ENCODE measurements at regions of chr11 and their contacts with region 1.

Region 1: DNA sequence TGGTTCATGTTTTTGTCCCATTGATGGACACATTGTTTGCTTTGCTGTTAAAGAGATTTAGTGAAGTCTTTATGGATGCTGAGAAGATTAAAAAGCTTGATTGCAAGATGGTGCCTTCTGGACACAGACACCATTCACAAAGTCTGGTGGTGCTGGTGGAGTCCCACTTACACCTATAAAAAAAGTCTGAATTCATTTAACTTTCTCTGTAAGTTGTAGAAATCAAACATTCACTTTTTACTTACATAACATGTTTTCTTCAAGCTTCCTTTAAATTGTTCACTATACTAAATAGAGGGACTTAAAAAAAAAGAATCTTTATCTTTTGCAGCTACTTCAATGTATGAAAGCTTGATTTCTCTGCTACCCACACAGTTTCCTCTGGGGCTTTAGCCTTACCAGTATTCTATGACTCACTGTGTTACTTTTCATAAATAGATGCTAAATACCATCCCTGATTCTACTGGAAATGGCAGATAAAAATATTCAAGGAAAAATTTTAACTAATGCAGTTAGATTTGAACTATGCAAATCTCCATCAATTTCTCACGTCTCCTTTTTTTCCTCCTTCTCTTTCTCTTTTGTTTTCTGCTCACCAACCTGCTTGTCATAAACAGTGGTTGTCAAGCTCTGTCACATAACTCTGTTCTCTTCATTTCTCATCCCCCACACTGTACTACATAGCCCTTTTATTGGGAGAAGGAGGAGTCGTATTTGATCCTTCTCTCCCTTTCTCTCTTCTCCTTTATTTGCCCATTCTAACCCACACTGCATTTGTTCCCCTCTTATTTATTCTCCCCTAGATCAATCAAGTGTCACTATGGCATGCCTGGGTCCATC is 89.7 kb downstream of the FAM76B start:
- DNase-seq: no peak
- H3K4me3 ChIP-seq: no peak overlapping the region
- H3K27ac ChIP-seq: peak overlapping the region in 1 of 2 donors; percentile 45
- H3K4me1 ChIP-seq: peaks cover 0 to 14% of the 10 kb centered on the region in 2 donors
- H3K27me3 ChIP-seq: no peaks in the 10 kb centered on the region
- CTCF ChIP-seq: no peak

Region 2: DNA sequence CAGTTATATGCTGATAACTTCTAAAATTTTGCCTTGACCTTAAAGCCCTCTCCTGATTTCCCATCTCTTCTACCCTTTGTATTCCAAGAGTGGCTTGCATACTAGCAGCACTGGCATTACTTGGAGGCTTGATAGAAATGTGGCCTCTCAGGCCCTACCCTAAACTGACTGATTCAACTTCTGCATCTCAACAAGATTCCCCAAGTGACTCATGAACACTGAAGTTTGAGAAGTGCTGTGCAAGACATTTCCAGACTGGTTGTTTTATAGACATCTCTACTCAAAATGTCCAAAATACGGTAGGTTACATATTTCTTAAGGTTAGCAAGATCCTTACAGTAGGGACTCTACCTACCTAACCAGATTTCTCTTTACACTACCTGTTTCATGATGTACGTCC is 517.5 kb before region 1 on chr11:
- intact Hi-C with region 1: no loop called
- DNase-seq: no peak
- H3K4me3 ChIP-seq: no peak overlapping the region
- H3K27ac ChIP-seq: no peak overlapping the region
- H3K4me1 ChIP-seq: no peaks in the 10 kb centered on the region
- H3K27me3 ChIP-seq: no peaks in the 10 kb centered on the region
- CTCF ChIP-seq: no peak

Region 3: DNA sequence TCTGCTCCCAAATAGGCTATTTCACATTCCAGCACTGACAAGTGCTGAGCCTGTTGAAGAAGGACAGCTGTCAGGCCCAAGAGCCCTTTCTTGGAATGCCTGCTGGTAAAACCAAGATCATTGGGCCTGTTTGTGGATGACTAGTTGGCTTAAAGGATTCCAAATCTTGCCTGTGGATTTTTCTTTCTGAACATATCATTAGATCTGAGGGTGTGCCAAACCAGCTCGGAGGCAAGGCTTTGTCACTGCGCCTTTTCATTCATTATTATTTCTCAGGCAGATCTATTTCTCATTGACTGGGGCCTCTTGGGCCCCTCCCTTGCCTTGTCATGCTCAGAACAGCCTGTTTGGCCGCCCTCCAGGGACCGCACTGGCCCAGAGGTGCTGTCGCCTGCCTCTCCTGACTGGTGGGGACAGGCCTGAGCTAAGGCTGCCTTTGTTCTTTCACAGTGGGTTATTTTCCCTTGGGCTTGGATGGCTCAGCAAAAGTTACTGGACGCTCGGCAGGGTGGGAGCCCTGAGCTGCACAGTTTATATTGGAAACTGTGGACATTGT is 246.2 kb before region 1 on chr11:
- intact Hi-C with region 1: loop called (anchors 5 kb)
- DNase-seq: peak in 1 of 2 donors; percentile 79
- H3K4me3 ChIP-seq: no peak overlapping the region
- H3K27ac ChIP-seq: peak overlapping the region; percentile 71 to 74
- H3K4me1 ChIP-seq: peaks cover 0 to 17% of the 10 kb centered on the region in 2 donors
- H3K27me3 ChIP-seq: no peaks in the 10 kb centered on the region
- CTCF ChIP-seq: no peak

Region 4: DNA sequence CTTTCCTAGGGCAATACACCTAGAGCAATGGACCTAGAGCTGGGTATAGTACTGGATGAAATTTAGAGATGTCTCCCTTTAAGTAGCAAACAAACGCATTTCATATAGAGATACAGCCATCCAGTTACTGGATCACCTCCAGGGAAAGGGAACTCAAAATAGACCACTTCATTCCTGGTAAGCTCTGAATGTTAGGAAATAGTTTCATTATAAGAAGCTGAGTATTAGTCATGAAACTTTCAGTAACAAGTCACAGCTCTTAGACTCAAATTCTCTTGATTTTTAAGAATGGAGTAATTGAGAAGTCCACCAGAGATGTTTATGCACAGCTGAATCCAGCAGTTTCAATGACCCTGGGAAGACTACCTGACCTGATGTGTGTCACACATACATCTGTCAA is 132.2 kb before region 1 on chr11:
- intact Hi-C with region 1: loop called (anchors 5 kb)
- DNase-seq: no peak
- H3K4me3 ChIP-seq: no peak overlapping the region
- H3K27ac ChIP-seq: peak overlapping the region; percentile 65 to 74
- H3K4me1 ChIP-seq: peaks cover 7 to 43% of the 10 kb centered on the region in 2 donors
- H3K27me3 ChIP-seq: no peaks in the 10 kb centered on the region
- CTCF ChIP-seq: no peak